SK-N-SH (cell line): ENCODE measurements at regions of chr1 and their contacts with region 1.

Region 1: GRCh38 chr1:86499987-86500593 is 31.4 kb downstream of the CLCA1 start:
- DNase-seq: peak; percentile 25
- H3K4me3 ChIP-seq: peak overlapping the region in 1 of 2 experiments; percentile 43; a peak in 1 of 4 replicates
- H3K27ac ChIP-seq: no peak overlapping the region
- H3K4me1 ChIP-seq: no peaks in the 10 kb centered on the region; a peak in 1 of 4 replicates
- H3K27me3 ChIP-seq: peaks cover 5% of the 10 kb centered on the region; the same call in 1 of the 2 replicates
- CTCF ChIP-seq: peak; percentile 99
- EP300 ChIP-seq: no peak
- RAD21 ChIP-seq: no peak; the same call in 1 of the 2 replicates

Region 2: DNA sequence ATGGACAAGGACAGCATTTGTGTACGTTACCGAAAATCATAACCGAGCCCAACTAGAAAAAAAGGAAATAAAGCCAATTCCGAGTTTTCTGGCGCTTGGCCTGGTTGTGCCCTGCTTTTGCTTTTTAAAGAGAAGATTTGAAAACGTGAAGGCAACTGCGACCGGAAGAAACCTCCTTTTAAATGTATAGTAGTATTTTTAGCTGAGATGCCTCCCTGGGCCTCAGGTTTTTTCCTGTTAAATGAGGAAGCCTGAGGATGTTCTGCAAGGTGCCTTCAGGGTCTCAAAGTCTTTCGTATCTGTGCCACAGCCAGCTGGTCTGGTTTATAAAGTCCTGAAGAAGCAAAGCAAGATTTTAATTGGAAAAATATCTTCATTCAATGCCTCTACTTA is 103.6 kb before region 1 on chr1:
- CTCF ChIA-PET with region 1: no interaction called
- POLR2A ChIA-PET with region 1: no interaction called
- DNase-seq: no peak
- H3K4me3 ChIP-seq: peak overlapping the region; percentile 96 to 97
- H3K27ac ChIP-seq: peak overlapping the region; percentile 74 to 90
- H3K4me1 ChIP-seq: peaks cover 0 to 6% of the 10 kb centered on the region in 2 experiments; a peak in 1 of 4 replicates
- H3K27me3 ChIP-seq: no peaks in the 10 kb centered on the region
- CTCF ChIP-seq: no peak
- EP300 ChIP-seq: no peak
- RAD21 ChIP-seq: no peak

Region 3: GRCh38 chr1:86481966-86482365 is 18.1 kb before region 1 on chr1:
- CTCF ChIA-PET with region 1: interaction called, 52 read pairs
- POLR2A ChIA-PET with region 1: no interaction called
- DNase-seq: no peak
- H3K4me3 ChIP-seq: no peak overlapping the region
- H3K27ac ChIP-seq: no peak overlapping the region
- H3K4me1 ChIP-seq: no peaks in the 10 kb centered on the region; a peak in 1 of 4 replicates
- H3K27me3 ChIP-seq: peaks cover under 1% of the 10 kb centered on the region; the same call in 1 of the 2 replicates
- CTCF ChIP-seq: no peak
- EP300 ChIP-seq: no peak
- RAD21 ChIP-seq: no peak

Region 4: GRCh38 chr1:86487131-86487810 is 12.8 kb before region 1 on chr1:
- CTCF ChIA-PET with region 1: interaction called, 52 read pairs
- POLR2A ChIA-PET with region 1: no interaction called
- DNase-seq: no peak
- H3K4me3 ChIP-seq: no peak overlapping the region
- H3K27ac ChIP-seq: no peak overlapping the region
- H3K4me1 ChIP-seq: no peaks in the 10 kb centered on the region; a peak in 1 of 4 replicates
- H3K27me3 ChIP-seq: no peaks in the 10 kb centered on the region
- CTCF ChIP-seq: no peak
- EP300 ChIP-seq: 0 out of 4 replicates have a peak, but pooled peaks of 1 of the 2 experiments have one; percentile 24
- RAD21 ChIP-seq: no peak